ENCODE measurements at regions of chr7 and their contacts with region 1.

Region 1: DNA sequence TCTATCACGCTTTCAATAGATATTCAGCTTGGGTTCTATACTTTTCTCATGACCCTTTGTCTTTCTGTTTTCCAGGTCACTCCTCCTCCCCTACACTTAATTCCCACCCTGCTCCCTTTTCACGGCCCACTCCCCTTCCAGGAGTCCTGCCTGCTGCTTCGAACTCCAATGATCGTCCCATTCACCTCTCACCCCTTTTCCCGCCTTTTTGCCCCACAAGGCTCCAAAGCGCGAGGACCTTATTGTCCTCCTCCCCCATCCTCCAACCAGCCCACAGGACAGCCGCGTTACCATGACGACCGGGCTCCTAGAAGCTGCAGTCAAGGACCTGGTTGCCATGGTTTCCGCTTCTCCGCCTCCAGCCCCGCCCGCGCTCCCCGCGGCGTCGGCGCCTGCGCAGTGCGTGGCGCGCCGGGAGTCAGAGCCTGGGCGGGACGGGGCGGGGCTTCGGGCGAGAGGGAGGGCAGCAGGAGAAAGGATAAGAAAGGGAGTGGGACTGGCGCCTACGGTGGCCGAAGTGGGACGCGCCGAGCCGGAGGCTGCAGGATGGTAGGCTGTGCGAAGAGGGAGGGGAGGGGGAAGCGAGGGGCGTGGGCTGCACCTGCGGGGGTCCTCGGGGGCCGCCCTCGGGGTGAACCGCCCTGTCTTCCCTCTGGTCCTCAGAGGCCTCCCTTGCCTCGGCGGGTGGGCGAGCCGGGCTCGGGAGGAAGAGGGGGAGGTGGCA is at the start of gene AP1S1:
- DNase-seq: peak; percentile 96 to 97
- ATAC-seq: peak; percentile 89 to 94
- H3K4me3 ChIP-seq: peak within 1 kb of the TSS; percentile 91
- H3K27ac ChIP-seq: peak within 1 kb of the TSS; percentile 93 to 100
- H3K4me1 ChIP-seq: peaks cover 36% of the 10 kb centered on the region
- CTCF ChIP-seq: no peak
- EP300 ChIP-seq: no peak
- POLR2A ChIP-seq: peak; percentile 52
- RAD21 ChIP-seq: no peak
- polyA plus RNA-seq, gene AP1S1: 107 and 128 TPM in 2 replicates

Region 2: GRCh38 chr7:101165075-101165957 is 11.2 kb after region 1 on chr7 and contains the start of gene VGF:
- CTCF ChIA-PET with region 1: interaction called, 30 read pairs
- POLR2A ChIA-PET with region 1: interaction called, 6 read pairs
- DNase-seq: peak; percentile 92 to 96
- ATAC-seq: peak; percentile 51 to 74; a peak in 5 of 6 replicates
- H3K4me3 ChIP-seq: peak within 1 kb of the TSS; percentile 54
- H3K27ac ChIP-seq: peak within 1 kb of the TSS; percentile 9 to 83; a peak in 4 of 6 replicates
- H3K4me1 ChIP-seq: peaks cover 86% of the 10 kb centered on the region
- CTCF ChIP-seq: no peak
- EP300 ChIP-seq: no peak
- POLR2A ChIP-seq: 0 out of 2 replicates have a peak, but pooled peaks have one; percentile 21
- RAD21 ChIP-seq: no peak
- polyA plus RNA-seq, gene VGF: 0.16 and 0.21 TPM in 2 replicates

Region 3: DNA sequence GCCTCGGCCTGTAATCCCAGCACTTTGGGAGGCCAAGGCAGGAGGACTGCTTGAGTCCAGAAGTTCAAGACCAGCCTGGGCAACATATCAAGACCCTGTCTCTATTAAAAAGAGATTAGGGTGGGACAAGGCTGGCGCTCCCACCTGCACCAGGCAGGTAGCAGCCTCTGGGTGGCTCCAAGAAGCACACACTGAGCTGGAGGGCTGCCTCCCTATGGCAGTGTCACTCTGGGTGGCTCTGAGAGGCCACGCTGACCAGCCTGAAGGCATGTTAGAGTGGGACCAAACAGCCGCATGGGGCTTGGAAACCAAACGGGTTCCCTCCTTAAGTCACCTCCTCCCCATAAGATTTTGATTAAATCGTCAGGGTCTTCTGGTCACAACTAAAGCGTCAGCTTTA is 188.8 kb after region 1 on chr7:
- CTCF ChIA-PET with region 1: no interaction called
- POLR2A ChIA-PET with region 1: no interaction called
- DNase-seq: no peak
- ATAC-seq: no peak
- H3K4me3 ChIP-seq: no peak overlapping the region
- H3K27ac ChIP-seq: no peak overlapping the region
- H3K4me1 ChIP-seq: no peaks in the 10 kb centered on the region
- CTCF ChIP-seq: no peak
- EP300 ChIP-seq: no peak
- POLR2A ChIP-seq: no peak
- RAD21 ChIP-seq: no peak

Measured in A549 (cell line).